CD8-positive, alpha-beta T cell (primary cell): ENCODE measurements at regions of chr9 and their contacts with region 1.

Region 1: DNA sequence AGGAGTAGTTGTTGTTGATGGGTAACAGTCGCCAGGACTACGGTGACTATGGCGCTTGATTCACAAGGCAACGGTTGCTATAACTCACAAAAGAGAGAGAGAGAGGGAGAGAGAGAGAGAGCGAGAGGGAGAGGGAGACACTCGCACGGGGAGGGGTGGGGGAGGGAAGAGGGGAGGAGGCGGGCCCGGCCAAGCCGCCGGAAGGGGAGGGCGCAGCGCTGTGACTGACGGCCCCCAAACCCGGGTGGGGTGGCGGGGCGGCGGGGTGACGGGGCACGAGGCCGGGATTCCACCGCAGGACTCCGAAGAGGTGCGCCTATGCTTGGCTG is at the start of gene RFX3:
- DNase-seq: peak; percentile 86 to 98 (median 93)
- ATAC-seq: peak; percentile 66
- H3K4me3 ChIP-seq: peak within 1 kb of the TSS; percentile 74 to 98
- H3K4me3 Mint-ChIP-seq: peak within 1 kb of the TSS; percentile 98
- H3K27ac ChIP-seq: peak within 1 kb of the TSS; percentile 99 to 100
- H3K27ac Mint-ChIP-seq: peak within 1 kb of the TSS; percentile 100
- H3K4me1 ChIP-seq: peaks cover 48% of the 10 kb centered on the region
- H3K4me1 Mint-ChIP-seq: peaks cover 65% of the 10 kb centered on the region
- H3K27me3 ChIP-seq: no peaks in the 10 kb centered on the region
- H3K27me3 Mint-ChIP-seq: no peaks in the 10 kb centered on the region
- CTCF ChIP-seq: no peak
- total RNA-seq, gene RFX3: 17.6 to 18.9 TPM

Region 2: GRCh38 chr9:2849941-2850340 is 675.9 kb before region 1 on chr9:
- CTCF ChIA-PET with region 1: no interaction called
- POLR2A ChIA-PET with region 1: no interaction called
- intact Hi-C with region 1: loop called in 1 of 2 experiments (anchors 2 kb)
- DNase-seq: peak in 2 of 9 experiments; percentile 11 to 42
- ATAC-seq: peak; percentile 59
- H3K4me3 ChIP-seq: no peak overlapping the region
- H3K4me3 Mint-ChIP-seq: no peak overlapping the region
- H3K27ac ChIP-seq: no peak overlapping the region
- H3K27ac Mint-ChIP-seq: no peak overlapping the region
- H3K4me1 ChIP-seq: peaks cover 8% of the 10 kb centered on the region
- H3K4me1 Mint-ChIP-seq: peaks cover 11% of the 10 kb centered on the region
- H3K27me3 ChIP-seq: no peaks in the 10 kb centered on the region
- H3K27me3 Mint-ChIP-seq: peaks cover 14% of the 10 kb centered on the region
- CTCF ChIP-seq: no peak

Region 3: GRCh38 chr9:3478549-3478953 is 47.2 kb before region 1 on chr9:
- CTCF ChIA-PET with region 1: no interaction called
- POLR2A ChIA-PET with region 1: interaction called, 30 read pairs
- intact Hi-C with region 1: loop called (anchors 2 to 5 kb)
- DNase-seq: peak in 2 of 9 experiments; percentile 39 to 63
- ATAC-seq: no peak
- H3K4me3 ChIP-seq: no peak overlapping the region
- H3K4me3 Mint-ChIP-seq: peak overlapping the region; percentile 11
- H3K27ac ChIP-seq: peak overlapping the region in 1 of 2 experiments; percentile 79
- H3K27ac Mint-ChIP-seq: peak overlapping the region; percentile 60
- H3K4me1 ChIP-seq: peaks cover 9% of the 10 kb centered on the region
- H3K4me1 Mint-ChIP-seq: peaks cover 53% of the 10 kb centered on the region
- H3K27me3 ChIP-seq: no peaks in the 10 kb centered on the region
- H3K27me3 Mint-ChIP-seq: no peaks in the 10 kb centered on the region
- CTCF ChIP-seq: no peak

Region 4: DNA sequence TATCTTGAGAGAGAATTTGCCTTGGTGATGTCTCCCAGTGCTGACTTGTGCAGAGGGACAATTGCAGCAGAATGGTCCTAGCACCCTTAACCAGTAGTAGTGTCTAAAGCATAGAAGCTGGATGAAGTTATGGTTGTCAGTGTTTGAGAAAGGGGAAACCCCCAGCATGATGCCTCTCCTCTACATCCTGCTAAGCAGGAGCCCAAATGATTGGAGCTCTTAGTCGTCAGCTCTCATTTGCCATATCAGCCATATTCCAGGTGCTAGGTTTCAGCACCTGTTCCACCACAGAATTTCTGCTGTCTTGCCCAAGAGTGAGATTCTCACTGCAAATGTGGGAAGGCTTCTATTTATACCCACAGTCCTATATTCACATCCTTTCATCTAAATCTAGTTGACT is 43.7 kb after region 1 on chr9:
- CTCF ChIA-PET with region 1: no interaction called
- POLR2A ChIA-PET with region 1: no interaction called
- intact Hi-C with region 1: loop called in 1 of 2 experiments (anchors 5 kb)
- DNase-seq: no peak
- ATAC-seq: no peak
- H3K4me3 ChIP-seq: no peak overlapping the region
- H3K4me3 Mint-ChIP-seq: no peak overlapping the region
- H3K27ac ChIP-seq: no peak overlapping the region
- H3K27ac Mint-ChIP-seq: no peak overlapping the region
- H3K4me1 ChIP-seq: no peaks in the 10 kb centered on the region
- H3K4me1 Mint-ChIP-seq: no peaks in the 10 kb centered on the region
- H3K27me3 ChIP-seq: no peaks in the 10 kb centered on the region
- H3K27me3 Mint-ChIP-seq: no peaks in the 10 kb centered on the region
- CTCF ChIP-seq: no peak

Region 5: DNA sequence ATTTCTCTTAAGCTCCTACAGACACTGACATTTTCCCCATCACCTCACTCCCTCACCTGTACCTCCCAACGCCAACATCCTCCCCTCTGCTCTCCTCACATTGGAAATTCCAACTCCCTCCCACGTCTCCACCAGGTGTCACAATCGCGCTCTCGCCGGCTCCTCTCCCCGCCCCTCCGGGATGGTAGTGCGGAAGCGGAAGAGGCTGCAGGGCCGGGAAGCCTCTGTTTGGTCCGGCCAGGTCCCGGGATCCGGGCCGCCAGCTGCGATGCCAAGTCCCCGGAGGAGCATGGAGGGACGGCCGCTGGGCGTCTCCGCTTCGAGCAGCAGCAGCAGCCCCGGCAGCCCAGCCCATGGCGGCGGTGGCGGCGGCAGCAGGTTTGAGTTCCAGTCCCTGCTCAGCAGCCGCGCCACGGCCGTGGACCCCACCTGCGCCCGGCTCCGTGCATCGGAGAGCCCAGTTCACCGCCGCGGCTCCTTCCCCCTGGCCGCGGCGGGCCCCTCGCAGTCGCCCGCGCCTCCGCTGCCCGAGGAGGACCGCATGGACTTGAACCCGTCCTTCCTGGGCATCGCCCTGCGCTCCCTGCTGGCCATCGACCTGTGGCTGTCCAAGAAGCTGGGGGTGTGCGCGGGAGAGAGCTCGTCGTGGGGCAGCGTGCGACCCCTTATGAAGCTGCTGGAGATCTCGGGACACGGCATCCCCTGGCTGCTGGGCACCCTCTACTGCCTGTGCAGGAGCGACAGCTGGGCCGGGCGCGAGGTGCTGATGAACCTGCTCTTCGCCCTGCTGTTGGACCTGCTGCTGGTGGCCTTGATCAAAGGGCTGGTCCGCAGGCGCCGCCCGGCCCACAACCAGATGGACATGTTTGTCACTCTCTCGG is 1136.5 kb after region 1 on chr9 and contains the start of gene PLPP6:
- CTCF ChIA-PET with region 1: no interaction called
- POLR2A ChIA-PET with region 1: interaction called, 5 read pairs
- intact Hi-C with region 1: loop called (anchors 5 kb)
- DNase-seq: peak; percentile 49 to 92 (median 78)
- ATAC-seq: peak; percentile 78
- H3K4me3 ChIP-seq: peak within 1 kb of the TSS; percentile 74 to 88
- H3K4me3 Mint-ChIP-seq: peak within 1 kb of the TSS; percentile 98
- H3K27ac ChIP-seq: peak within 1 kb of the TSS; percentile 67 to 70
- H3K27ac Mint-ChIP-seq: peak within 1 kb of the TSS; percentile 98
- H3K4me1 ChIP-seq: peaks cover 54% of the 10 kb centered on the region
- H3K4me1 Mint-ChIP-seq: peaks cover 66% of the 10 kb centered on the region
- H3K27me3 ChIP-seq: no peaks in the 10 kb centered on the region
- H3K27me3 Mint-ChIP-seq: no peaks in the 10 kb centered on the region
- CTCF ChIP-seq: peak; percentile 59
- total RNA-seq, gene PLPP6: 4.4 TPM

Region 6: DNA sequence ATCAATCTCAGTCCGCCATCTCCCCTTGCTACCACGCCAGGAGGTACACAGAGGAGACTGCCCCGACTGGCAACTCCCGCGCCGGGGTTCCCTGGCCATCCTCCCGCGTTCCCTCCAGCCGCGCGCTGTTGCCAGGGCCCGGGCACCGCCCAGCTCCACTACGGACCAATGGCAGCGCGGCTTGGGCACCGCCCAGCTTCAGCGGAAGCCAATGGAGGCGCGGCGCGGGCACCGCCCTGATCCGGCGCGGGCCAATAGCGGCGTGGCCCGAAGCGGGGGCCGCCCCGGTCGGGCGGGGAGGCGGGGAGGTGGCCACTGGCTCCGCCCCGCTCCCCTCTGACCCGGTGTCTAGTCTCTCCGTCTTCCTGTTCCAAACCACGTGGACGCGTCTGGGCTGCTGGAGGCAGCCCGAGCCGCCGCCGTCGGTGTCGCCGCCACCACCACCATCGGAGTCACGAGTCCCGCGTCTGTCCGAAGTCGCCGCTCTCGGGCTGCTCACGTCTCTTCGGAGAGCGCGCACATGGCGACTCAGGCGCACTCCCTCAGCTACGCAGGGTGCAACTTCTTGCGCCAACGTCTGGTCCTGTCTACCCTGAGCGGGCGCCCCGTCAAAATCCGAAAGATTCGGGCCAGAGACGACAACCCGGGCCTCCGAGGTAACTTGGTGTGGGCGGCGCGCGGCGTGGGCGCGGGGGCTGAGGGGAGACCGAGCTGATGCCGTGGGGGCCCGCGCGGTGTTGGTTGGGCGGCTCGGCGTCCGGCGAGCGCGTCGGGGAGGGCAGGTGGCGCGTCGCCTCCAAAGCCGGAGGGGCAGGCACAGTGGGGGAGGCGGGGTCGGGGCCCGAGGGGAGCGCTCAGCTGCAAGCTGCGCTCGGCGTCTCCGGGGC is 1267.0 kb after region 1 on chr9 and contains the start of gene RCL1:
- CTCF ChIA-PET with region 1: no interaction called
- POLR2A ChIA-PET with region 1: interaction called, 8 read pairs
- intact Hi-C with region 1: loop called (anchors 2 to 5 kb)
- DNase-seq: peak; percentile 92 to 98 (median 95)
- ATAC-seq: peak; percentile 90
- H3K4me3 ChIP-seq: peak within 1 kb of the TSS; percentile 92 to 98
- H3K4me3 Mint-ChIP-seq: peak within 1 kb of the TSS; percentile 95
- H3K27ac ChIP-seq: peak within 1 kb of the TSS; percentile 90 to 92
- H3K27ac Mint-ChIP-seq: peak within 1 kb of the TSS; percentile 96
- H3K4me1 ChIP-seq: peaks cover 30% of the 10 kb centered on the region
- H3K4me1 Mint-ChIP-seq: peaks cover 47% of the 10 kb centered on the region
- H3K27me3 ChIP-seq: no peaks in the 10 kb centered on the region
- H3K27me3 Mint-ChIP-seq: no peaks in the 10 kb centered on the region
- CTCF ChIP-seq: no peak
- total RNA-seq, gene RCL1: 30.8 to 35.0 TPM